ENCODE measurements at regions of chr12 and their contacts with region 1.

Region 1: GRCh38 chr12:1795785-1796514 is 24.4 kb upstream of the LRTM2 start:
- H3K4me3 Mint-ChIP-seq: peak overlapping the region; percentile 89
- H3K27ac Mint-ChIP-seq: peak overlapping the region; percentile 96
- H3K4me1 Mint-ChIP-seq: peaks cover 38% of the 10 kb centered on the region
- H3K27me3 Mint-ChIP-seq: no peaks in the 10 kb centered on the region

Region 2: GRCh38 chr12:1318327-1319031 is 477.5 kb before region 1 on chr12:
- intact Hi-C with region 1: no loop called
- H3K4me3 Mint-ChIP-seq: no peak overlapping the region
- H3K27ac Mint-ChIP-seq: peak overlapping the region; percentile 13
- H3K4me1 Mint-ChIP-seq: peaks cover 22% of the 10 kb centered on the region
- H3K27me3 Mint-ChIP-seq: no peaks in the 10 kb centered on the region

Region 3: DNA sequence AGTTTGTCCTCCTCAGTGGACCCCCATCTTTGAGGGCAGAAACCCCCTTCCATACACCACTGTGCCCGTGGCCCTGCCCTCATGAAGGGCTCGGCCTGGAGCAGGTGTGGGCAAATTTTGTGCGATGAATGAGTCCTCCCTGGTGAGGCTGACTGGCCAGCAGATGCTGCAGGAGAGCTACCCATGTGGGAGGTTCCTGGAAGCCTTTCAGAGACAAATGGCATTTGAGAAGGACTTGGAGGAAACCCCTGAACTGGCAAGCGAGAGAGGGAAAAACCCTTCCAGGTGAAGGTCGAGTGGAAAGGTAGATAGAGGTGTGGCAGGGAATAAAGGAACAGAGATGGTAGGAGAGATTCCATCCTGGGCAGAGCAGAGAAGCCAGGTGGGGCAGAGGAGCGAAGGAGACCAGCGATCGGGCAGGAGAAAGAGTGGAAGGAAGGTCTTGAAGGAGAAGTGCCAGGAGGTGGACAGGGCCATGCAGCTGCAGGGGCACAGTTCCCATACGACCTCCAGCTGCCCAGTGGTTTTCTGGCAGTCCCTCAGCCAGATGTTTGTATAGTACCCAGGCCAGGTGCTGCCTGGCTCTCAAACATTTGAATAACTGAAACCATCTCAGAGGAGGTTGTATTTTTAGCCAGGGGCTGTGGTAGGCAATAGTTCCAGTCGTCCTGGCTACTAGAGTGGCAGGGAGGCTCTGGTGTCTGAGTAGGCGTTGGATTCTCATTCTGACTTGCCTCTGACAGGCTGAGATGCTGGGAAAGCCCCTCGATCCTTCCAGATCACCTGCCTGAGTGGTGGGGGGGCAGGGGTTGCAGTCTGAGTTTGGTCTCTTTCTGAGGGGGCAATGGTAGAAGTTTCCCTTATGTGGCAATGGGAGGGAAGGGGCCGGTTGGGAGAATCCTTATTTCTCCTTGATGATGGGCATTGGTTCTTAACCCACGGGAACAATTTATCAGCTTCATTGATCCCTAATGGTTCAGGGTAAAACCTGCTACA is 241.7 kb before region 1 on chr12:
- intact Hi-C with region 1: no loop called
- H3K4me3 Mint-ChIP-seq: no peak overlapping the region
- H3K27ac Mint-ChIP-seq: no peak overlapping the region
- H3K4me1 Mint-ChIP-seq: no peaks in the 10 kb centered on the region
- H3K27me3 Mint-ChIP-seq: peaks cover 10% of the 10 kb centered on the region

Region 4: DNA sequence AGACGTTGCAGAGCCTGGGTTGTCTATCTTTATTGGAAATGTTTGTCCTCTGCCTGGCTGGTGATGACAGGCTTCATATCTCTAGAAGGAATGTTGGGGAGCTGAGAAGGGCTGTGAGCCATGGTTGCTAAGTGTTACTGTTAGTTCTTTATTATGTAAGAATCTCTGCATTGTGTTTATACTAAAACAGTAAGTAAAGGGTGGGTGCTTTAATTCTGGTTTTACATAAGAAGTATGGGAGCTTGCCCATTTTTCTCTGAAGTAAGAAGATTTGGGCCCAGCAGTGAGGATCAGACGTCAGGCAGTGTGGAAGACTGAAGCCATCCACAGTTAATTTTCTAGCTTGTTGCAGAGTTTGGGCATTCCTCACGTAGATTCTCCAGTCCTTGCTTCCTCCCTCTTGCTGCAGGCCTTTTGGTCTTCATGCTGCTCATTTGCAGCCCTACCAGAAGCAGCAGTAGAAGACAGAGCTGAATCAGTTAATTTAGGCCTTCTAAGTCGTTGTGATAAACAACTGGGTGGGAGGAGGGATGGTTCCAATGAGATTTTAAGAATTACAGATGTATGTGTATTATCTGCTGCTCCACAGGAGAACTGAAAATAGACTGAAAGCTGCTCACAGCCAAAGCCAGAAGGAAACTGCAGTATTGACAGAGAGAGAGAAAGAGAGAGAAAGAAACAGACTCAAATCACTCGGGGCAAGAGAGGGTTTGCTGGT is 145.5 kb before region 1 on chr12:
- intact Hi-C with region 1: loop called (anchors 1 kb)
- H3K4me3 Mint-ChIP-seq: no peak overlapping the region
- H3K27ac Mint-ChIP-seq: no peak overlapping the region
- H3K4me1 Mint-ChIP-seq: peaks cover 46% of the 10 kb centered on the region
- H3K27me3 Mint-ChIP-seq: peaks cover 4% of the 10 kb centered on the region

Region 5: DNA sequence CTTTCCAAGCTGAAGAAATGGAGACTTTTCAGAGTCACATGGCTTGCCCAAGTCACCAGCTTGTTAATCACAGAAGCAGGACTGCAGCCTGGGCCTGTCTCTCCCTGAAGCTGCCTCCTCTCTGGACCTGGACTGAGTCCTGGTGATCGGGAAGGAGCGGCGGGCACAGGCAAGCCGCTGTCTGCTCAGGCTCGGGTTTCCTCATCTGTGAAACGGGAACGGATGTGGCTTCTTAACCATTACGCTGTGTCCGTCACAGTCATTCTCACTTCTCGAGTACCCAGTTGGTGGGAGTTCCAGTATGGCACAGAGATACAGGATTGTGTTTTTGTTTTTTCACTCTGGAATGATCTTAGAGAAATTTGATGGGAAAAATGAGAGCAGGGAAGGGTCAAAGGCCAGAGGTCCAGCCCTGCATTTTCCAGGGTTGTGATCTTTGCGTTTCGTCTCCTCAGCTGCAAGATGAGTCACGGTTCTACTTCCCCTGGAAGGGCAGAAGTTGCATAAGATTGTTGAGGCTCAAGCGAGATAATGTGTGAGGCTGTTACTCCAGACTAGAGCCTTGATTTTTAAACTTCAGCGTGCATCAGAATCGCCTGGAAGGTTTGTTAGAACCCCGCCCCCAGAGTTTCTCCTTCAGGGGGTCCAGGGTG is 16.8 kb after region 1 on chr12:
- intact Hi-C with region 1: loop called (anchors 2 kb)
- H3K4me3 Mint-ChIP-seq: peak overlapping the region; percentile 54
- H3K27ac Mint-ChIP-seq: peak overlapping the region; percentile 95
- H3K4me1 Mint-ChIP-seq: peaks cover 81% of the 10 kb centered on the region
- H3K27me3 Mint-ChIP-seq: peaks cover 3% of the 10 kb centered on the region

Region 6: DNA sequence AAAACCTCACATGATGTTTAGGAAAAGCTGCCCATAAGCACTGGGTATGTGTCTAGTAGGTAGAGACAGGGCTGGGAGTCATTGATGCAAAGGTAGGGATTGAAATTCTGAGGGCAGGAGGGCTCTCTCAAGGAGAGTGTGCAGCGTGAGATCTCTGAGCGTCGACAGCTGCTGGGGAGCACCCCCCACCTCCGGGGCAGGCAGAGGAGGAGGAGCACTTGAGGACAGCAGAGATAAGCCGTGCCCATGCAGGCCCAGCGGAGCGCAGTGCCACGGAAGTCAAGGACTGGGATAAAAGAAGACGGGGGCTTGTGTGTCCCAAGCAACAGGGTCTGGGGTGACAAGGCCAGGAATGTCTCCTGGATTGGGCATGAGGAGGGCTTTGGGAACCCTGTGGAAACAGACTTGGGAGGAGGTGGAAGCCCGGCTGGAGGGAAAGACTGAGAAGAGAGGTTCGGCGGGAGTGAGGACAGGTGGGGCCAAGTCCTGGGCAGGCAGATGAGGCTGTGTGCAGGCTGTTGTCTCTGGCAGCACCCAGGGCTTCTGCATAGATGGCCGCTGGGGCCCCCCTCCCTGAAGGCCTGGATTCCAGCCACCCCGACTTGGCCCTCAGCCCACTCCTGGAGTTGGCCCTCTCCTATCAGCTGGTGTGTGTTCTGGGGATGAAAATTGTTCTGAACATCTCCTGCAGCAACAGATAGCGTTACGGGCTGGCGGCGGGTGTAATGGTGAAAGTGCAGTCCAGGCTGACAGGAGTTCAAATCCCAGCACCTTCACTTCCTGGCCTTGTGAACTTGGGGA is 120.6 kb after region 1 on chr12:
- intact Hi-C with region 1: loop called (anchors 5 kb)
- H3K4me3 Mint-ChIP-seq: no peak overlapping the region
- H3K27ac Mint-ChIP-seq: peak overlapping the region; percentile 29
- H3K4me1 Mint-ChIP-seq: peaks cover 53% of the 10 kb centered on the region
- H3K27me3 Mint-ChIP-seq: peaks cover 10% of the 10 kb centered on the region

Region 7: DNA sequence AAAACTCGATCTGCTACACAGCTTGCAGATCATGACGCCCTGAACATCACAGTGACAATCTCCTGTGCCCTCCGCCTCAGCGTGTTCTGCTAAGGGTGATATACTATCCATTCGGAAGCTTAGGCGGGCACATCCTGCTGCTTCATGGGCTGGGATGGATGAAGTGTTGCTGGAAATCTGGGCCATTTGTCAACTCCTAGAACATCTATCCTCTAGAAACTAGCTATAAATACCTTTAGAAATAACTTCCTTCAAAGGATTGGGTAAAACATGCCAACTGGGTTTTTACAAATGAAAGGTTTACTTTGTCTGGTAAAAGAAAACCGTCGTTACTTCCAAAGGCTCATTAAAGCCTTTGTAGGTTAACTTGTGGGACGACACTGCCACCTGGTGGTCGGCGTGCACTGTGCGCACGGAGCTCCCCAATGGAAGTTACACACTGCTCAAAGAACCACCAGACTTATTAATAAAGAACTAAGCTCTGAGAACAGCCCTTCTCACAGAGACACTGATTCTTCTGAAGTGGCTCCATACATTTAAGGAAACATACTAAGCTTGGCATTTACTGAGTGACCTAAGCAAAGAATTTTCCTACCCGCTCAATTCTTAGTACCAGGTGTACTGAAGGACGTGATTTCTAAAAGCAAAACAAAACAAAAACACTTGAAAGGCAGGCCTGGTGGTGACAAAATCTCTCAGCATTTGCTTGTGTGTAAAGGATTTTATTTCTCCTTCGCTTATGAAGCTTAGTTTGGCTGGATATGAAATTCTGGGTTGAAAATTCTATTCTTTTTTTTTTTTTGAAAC is 144.1 kb after region 1 on chr12:
- intact Hi-C with region 1: loop called (anchors 1 kb)
- H3K4me3 Mint-ChIP-seq: no peak overlapping the region
- H3K27ac Mint-ChIP-seq: no peak overlapping the region
- H3K4me1 Mint-ChIP-seq: no peaks in the 10 kb centered on the region
- H3K27me3 Mint-ChIP-seq: no peaks in the 10 kb centered on the region

Region 8: GRCh38 chr12:1972856-1973317 is 176.9 kb after region 1 on chr12:
- intact Hi-C with region 1: no loop called
- H3K4me3 Mint-ChIP-seq: no peak overlapping the region
- H3K27ac Mint-ChIP-seq: no peak overlapping the region
- H3K4me1 Mint-ChIP-seq: no peaks in the 10 kb centered on the region
- H3K27me3 Mint-ChIP-seq: no peaks in the 10 kb centered on the region

Region 9: DNA sequence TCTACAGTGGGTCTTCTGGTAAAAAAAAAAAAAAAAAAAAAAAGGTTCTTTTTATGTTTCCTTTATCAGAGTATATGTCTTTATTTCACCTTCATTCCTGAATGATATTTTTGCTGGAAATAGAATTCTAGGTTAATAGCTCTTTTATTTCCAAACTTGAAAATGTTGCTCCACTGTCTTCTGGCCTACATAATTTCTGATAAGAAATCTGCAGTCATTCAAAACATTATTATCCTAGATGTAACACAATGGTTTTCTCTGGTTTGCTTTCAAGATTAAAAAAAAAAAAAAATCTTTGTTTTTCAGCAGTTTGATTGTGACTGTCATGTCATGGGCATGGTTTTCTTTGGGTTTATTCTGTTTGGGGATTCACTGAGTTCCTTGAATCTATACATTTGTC is 188.8 kb after region 1 on chr12:
- intact Hi-C with region 1: no loop called
- H3K4me3 Mint-ChIP-seq: no peak overlapping the region
- H3K27ac Mint-ChIP-seq: no peak overlapping the region
- H3K4me1 Mint-ChIP-seq: no peaks in the 10 kb centered on the region
- H3K27me3 Mint-ChIP-seq: no peaks in the 10 kb centered on the region

Region 10: DNA sequence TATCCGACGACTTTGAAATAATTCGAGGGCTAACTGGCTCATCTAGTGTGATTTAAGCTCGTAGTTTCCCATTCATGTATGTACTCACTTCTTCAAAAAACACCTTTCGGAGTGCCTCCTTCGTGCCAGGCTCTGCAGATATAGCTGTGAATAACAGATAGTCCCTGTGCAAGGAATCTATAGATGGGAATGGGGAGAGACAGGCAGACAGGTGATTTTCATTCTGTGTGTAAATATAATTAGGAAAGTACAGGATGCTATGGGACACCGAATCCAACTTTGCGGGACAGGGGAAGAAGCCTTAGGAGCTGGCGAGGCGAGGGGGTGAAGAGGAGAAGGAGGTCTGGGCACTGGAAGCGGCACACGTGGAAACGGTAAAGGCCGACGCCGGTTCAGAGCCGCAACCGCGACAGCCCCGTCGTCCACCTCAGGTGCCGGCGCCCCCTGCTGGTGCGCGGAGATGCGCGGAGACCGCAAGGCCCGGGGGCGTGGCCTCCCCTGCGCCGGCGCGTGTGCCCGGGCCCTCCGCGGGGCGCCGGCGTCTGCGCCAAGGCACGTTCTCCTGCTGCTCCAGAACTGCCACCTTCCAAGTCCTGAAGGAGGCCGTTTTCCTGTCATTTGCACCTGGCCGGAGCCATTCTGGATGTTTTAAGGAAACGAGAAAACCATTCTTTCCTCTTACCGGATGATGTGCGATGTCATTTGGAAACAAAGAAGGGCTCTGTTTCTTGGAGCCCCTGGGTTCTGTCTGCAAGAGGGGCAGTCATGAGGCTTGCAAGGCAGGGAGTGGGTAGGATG is 238.9 kb after region 1 on chr12:
- intact Hi-C with region 1: loop called (anchors 10 kb)
- H3K4me3 Mint-ChIP-seq: peak overlapping the region; percentile 51
- H3K27ac Mint-ChIP-seq: no peak overlapping the region
- H3K4me1 Mint-ChIP-seq: peaks cover 15% of the 10 kb centered on the region
- H3K27me3 Mint-ChIP-seq: peaks cover 66% of the 10 kb centered on the region

Measured in dendritic cell treated with granulocyte-macrophage colony-stimulating factor and Interleukin-4, amounts not matched to agents 40 ng/mL and 50 ng/mL, for 4 days (primary cell).